ENCODE measurements at regions of chr20 and their contacts with region 1.

Region 1: DNA sequence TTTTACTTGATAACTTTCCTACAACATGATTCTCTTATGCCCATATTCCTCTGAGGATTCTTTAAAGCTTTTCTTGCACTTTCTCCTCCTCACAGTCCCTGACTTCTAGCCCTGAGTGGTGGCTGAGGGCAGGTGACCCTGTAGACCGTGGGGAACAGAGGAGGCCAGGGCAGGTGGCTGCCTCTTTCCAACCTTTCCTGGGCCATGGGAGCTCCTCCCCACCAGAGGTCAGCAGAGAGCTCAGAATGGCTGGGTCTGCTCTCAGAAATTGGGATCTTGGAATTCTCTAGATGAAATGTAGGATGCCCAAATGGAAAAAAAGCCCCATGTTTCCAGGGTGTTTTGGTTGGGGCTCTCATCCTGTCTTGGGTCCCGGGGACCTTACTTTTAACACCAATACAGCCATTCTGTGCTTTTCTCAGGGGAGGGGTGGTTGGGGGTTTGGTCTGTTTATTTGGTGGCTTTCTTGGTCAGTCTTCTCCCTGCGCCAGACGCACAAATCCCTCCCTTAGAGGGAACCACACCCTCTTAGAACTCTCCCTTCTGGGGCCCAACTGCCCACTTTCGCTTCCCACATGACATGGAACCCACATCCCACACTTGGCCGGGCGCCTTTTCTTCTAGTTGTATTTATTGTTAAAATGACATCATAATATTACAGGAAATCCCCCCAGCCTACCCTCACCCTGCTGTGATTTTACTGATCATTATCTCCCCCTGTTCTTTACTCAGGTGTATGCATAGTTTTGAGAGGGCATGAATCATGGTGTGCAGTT is 17.9 kb downstream of the GNAS start:
- DNase-seq: no peak
- ATAC-seq: peak; percentile 99
- H3K4me3 ChIP-seq: no peak overlapping the region
- H3K27ac ChIP-seq: no peak overlapping the region
- H3K4me1 ChIP-seq: no peaks in the 10 kb centered on the region
- H3K27me3 ChIP-seq: no peaks in the 10 kb centered on the region
- CTCF ChIP-seq: peak; percentile 73 to 97 (median 87)
- POLR2A ChIP-seq: no peak
- RAD21 ChIP-seq: peak; percentile 83

Region 2: DNA sequence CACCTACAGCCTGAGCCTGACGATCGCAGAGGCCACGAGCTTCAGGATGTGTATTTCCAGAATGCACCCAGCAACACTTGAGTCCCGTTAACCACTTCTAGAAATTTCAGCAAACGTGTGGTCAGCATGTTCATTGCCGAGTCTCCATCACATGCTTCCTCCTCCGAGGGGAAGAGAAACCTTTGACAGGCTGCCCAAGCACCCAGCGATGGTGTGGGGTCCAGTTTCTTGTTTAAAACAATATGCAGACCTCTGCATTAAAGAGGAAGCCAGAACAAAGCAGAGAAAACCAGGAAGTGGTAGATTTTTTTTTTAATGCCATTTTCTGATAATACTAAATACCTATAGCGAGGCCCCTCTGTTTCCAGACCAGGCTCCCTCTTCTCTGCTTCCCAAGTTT is 91.7 kb before region 1 on chr20:
- CTCF ChIA-PET with region 1: no interaction called
- POLR2A ChIA-PET with region 1: no interaction called
- RAD21 ChIA-PET with region 1: no interaction called
- intact Hi-C with region 1: no loop called
- DNase-seq: no peak
- ATAC-seq: no peak
- H3K4me3 ChIP-seq: no peak overlapping the region
- H3K27ac ChIP-seq: no peak overlapping the region
- H3K4me1 ChIP-seq: no peaks in the 10 kb centered on the region
- H3K27me3 ChIP-seq: peaks cover 71% of the 10 kb centered on the region
- CTCF ChIP-seq: no peak
- POLR2A ChIP-seq: no peak
- RAD21 ChIP-seq: no peak

Region 3: GRCh38 chr20:59222253-59223181 is 352.1 kb after region 1 on chr20:
- CTCF ChIA-PET with region 1: interaction called, 8 read pairs
- POLR2A ChIA-PET with region 1: interaction called, 3 read pairs
- RAD21 ChIA-PET with region 1: interaction called in 1 of 2 experiments, 3 read pairs
- intact Hi-C with region 1: loop called (anchors 2 kb)
- DNase-seq: peak; percentile 33
- ATAC-seq: peak; percentile 97
- H3K4me3 ChIP-seq: peak overlapping the region; percentile 23 to 41
- H3K27ac ChIP-seq: no peak overlapping the region
- H3K4me1 ChIP-seq: peaks cover 0 to 10% of the 10 kb centered on the region in 2 experiments; a peak in 1 of 4 replicates
- H3K27me3 ChIP-seq: peaks cover 34% of the 10 kb centered on the region
- CTCF ChIP-seq: peak; percentile 78 to 97 (median 90)
- POLR2A ChIP-seq: no peak
- RAD21 ChIP-seq: peak; percentile 81

Region 4: GRCh38 chr20:59403261-59403961 is 533.0 kb after region 1 on chr20:
- CTCF ChIA-PET with region 1: interaction called, 5 read pairs
- POLR2A ChIA-PET with region 1: no interaction called
- RAD21 ChIA-PET with region 1: no interaction called
- intact Hi-C with region 1: loop called (anchors 1 kb)
- DNase-seq: no peak
- ATAC-seq: peak; percentile 90
- H3K4me3 ChIP-seq: no peak overlapping the region
- H3K27ac ChIP-seq: no peak overlapping the region
- H3K4me1 ChIP-seq: peaks cover 0 to 2% of the 10 kb centered on the region in 2 experiments; a peak in 1 of 4 replicates
- H3K27me3 ChIP-seq: peaks cover 81% of the 10 kb centered on the region
- CTCF ChIP-seq: peak; percentile 57 to 96 (median 95)
- POLR2A ChIP-seq: no peak
- RAD21 ChIP-seq: peak; percentile 83

Region 5: DNA sequence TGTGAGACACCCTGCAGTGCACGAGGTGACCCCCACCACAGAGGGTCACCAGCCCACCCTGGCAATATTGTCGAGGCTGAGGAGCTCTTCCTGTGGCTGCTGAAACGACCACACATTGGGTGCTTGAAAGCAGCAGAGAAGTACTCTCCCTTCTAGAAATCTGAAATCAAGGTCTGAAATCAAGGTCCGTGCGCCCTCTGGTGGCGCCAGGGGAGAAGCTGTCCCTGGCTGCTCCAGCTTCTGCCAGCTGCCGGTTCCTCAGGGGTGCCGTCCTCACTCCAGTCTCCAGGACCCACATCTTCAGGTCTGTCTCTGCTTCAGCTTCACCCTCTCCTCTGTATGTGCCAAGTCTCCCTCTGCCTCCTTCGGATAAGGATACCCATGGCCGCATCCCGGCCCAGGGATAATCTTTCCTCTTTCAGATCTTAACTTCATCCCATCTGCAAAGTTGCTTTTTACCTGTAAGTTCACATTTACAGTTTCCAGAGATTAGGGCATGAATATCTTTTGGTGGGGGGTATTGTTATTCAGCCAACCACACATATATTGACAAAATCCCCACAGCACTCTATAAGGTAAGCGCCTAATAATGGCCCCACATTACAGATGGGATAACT is 625.6 kb after region 1 on chr20:
- CTCF ChIA-PET with region 1: interaction called, 6 read pairs
- POLR2A ChIA-PET with region 1: no interaction called
- RAD21 ChIA-PET with region 1: interaction called, 3 read pairs
- intact Hi-C with region 1: loop called (anchors 1 kb)
- DNase-seq: peak; percentile 36
- ATAC-seq: peak; percentile 95
- H3K4me3 ChIP-seq: no peak overlapping the region
- H3K27ac ChIP-seq: no peak overlapping the region
- H3K4me1 ChIP-seq: no peaks in the 10 kb centered on the region
- H3K27me3 ChIP-seq: peaks cover 21% of the 10 kb centered on the region; the same call in 1 of the 2 replicates
- CTCF ChIP-seq: peak; percentile 33 to 94 (median 92); a peak in 5 of 6 replicates
- POLR2A ChIP-seq: no peak
- RAD21 ChIP-seq: peak; percentile 62